Breast epithelium (tissue), 4 donors: ENCODE measurements at regions of chr20 and their contacts with region 1.

Region 1: GRCh38 chr20:63750807-63751470 is 11.4 kb downstream of the SLC2A4RG start:
- DNase-seq: no peak
- H3K4me3 ChIP-seq: no peak overlapping the region
- H3K27ac ChIP-seq: no peak overlapping the region
- H3K4me1 ChIP-seq: no peaks in the 10 kb centered on the region
- H3K27me3 ChIP-seq: no peaks in the 10 kb centered on the region
- CTCF ChIP-seq: no peak
- POLR2A ChIP-seq: no peak

Region 2: DNA sequence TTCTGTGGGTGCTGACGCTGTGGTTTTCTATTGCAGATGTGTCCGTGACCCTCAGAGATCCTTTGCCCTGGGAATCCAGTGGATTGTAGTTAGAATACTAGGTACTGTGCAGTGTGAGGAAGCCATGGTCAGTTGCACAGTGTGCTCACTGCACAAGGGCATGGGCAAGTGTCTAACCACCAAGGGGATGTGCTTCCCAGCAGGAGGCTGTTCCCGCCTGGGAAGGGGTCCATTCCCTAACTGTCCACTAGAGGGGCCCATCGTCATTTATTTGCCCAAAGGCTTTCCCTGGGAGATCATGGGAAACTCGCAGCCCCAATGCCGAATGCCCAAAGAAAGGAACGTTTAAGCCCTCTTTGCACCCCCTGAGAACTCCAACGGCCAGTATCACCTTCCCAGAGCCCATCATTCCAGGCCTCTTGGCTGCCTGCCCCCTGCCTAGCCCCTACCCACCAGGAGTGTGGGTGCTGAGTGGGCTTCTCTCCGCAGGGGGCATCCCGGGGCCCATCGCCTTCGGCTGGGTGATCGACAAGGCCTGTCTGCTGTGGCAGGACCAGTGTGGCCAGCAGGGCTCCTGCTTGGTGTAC is 1082.4 kb before region 1 on chr20:
- intact Hi-C with region 1: loop called (anchors 5 kb)
- DNase-seq: peak; percentile 57 to 64
- H3K4me3 ChIP-seq: no peak overlapping the region
- H3K27ac ChIP-seq: no peak overlapping the region
- H3K4me1 ChIP-seq: peaks cover 0 to 9% of the 10 kb centered on the region in 2 donors
- H3K27me3 ChIP-seq: peaks cover 0 to 5% of the 10 kb centered on the region in 2 donors
- CTCF ChIP-seq: peak; percentile 76 to 85 (median 80)
- POLR2A ChIP-seq: no peak